CD8-positive, alpha-beta T cell (primary cell): ENCODE measurements at regions of chr4 and their contacts with region 1.

Region 1: DNA sequence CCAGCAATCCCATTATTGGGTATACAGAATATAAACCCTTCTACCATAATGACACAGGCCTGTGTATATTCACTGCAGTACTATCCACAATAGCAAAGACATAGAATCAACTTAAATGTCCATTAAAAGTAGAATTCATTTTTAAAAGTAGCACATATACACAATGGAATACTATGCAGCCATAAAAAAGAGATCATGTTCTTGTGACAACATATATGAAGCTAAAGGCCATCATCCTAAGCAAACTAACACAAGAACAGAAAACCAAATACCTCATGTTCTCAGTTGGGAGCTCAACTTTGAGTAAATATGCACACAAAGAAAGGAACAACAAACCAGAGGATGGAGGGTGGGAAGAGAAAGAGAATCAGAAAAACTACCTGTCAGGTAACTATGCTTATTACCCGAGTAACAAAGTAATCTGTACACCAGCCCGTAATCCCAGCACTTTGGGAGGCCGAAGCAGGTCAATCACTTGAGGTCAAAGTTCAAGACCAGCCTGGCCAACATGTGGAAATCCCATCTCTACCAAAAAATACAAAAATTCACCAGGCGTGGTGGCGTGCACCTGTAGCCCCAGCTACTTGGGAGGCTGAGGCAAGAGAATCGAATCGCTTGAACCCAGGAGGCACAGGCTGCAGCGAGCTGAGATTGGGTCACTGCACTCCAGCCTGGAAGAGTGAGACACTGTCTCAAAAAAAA is 22.8 kb downstream of the DHX15 start:
- DNase-seq: no peak
- ATAC-seq: no peak
- H3K4me3 ChIP-seq: no peak overlapping the region
- H3K4me3 Mint-ChIP-seq: no peak overlapping the region
- H3K27ac ChIP-seq: no peak overlapping the region
- H3K27ac Mint-ChIP-seq: peak overlapping the region; percentile 20
- H3K4me1 ChIP-seq: peaks cover 48% of the 10 kb centered on the region
- H3K4me1 Mint-ChIP-seq: peaks cover 85% of the 10 kb centered on the region
- H3K27me3 ChIP-seq: no peaks in the 10 kb centered on the region
- H3K27me3 Mint-ChIP-seq: no peaks in the 10 kb centered on the region
- CTCF ChIP-seq: no peak

Region 2: DNA sequence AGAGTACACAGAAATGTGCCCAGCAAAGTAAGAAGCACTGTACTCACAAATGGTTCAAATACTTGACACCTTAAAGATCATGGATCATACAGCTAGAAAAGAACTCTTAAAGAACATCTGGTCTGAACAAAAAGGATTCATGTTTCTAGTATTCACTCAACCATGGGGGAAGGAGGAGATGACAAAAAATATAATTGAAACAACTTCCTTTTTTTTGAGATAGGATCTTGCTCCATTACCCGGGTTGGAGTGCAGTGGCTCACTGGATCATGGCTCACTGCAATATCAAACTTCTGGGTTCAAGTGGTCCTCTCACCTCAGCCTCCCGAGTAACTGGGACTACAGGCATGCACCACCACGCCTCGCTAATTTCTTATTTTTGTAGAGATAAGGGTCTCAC is 16.8 kb after region 1 on chr4:
- CTCF ChIA-PET with region 1: no interaction called
- POLR2A ChIA-PET with region 1: no interaction called
- intact Hi-C with region 1: loop called in 1 of 2 experiments (anchors 2 kb)
- DNase-seq: no peak
- ATAC-seq: no peak
- H3K4me3 ChIP-seq: no peak overlapping the region
- H3K4me3 Mint-ChIP-seq: peak overlapping the region; percentile 3
- H3K27ac ChIP-seq: no peak overlapping the region
- H3K27ac Mint-ChIP-seq: peak overlapping the region; percentile 60
- H3K4me1 ChIP-seq: peaks cover 30% of the 10 kb centered on the region
- H3K4me1 Mint-ChIP-seq: peaks cover 85% of the 10 kb centered on the region
- H3K27me3 ChIP-seq: no peaks in the 10 kb centered on the region
- H3K27me3 Mint-ChIP-seq: no peaks in the 10 kb centered on the region
- CTCF ChIP-seq: no peak